ENCODE measurements at regions of chr1 and their contacts with region 1.

Region 1: DNA sequence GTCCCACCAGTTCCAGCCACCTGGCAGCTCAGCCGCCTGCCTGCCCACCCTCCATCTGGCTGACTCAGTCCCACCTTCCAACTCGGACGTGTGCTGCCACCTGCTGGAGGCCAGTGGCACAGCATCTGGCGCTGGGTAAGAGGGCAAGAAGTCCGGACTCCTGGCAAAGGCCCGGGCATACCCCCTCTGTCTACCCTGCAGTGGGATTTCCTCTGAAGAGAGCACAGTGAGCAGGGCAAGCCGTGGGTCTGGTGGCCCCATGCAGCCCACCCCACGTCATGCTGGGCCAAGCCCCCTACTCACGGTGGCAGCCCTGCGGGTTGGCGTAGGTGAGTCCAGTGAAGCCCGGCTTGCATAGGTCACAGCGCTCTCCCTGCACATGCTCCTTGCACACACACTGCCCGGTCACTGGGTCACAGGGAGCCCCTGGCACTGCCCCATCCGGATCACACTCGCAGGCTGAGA is 24.5 kb downstream of the LAMB3 start:
- DNase-seq: peak; percentile 45 to 84 (median 73)
- ATAC-seq: peak; percentile 84
- H3K4me3 ChIP-seq: no peak overlapping the region
- H3K4me3 Mint-ChIP-seq: no peak overlapping the region
- H3K27ac ChIP-seq: no peak overlapping the region
- H3K27ac Mint-ChIP-seq: no peak overlapping the region
- H3K4me1 ChIP-seq: no peaks in the 10 kb centered on the region
- H3K4me1 Mint-ChIP-seq: peaks cover 2% of the 10 kb centered on the region
- H3K27me3 ChIP-seq: no peaks in the 10 kb centered on the region
- H3K27me3 Mint-ChIP-seq: peaks cover 2% of the 10 kb centered on the region
- CTCF ChIP-seq: peak; percentile 95

Region 2: GRCh38 chr1:209576798-209577197 is 51.0 kb before region 1 on chr1:
- CTCF ChIA-PET with region 1: interaction called, 7 read pairs
- POLR2A ChIA-PET with region 1: no interaction called
- intact Hi-C with region 1: loop called (anchors 1 to 2 kb)
- DNase-seq: peak; percentile 24 to 71 (median 63)
- ATAC-seq: peak; percentile 75
- H3K4me3 ChIP-seq: no peak overlapping the region
- H3K4me3 Mint-ChIP-seq: no peak overlapping the region
- H3K27ac ChIP-seq: no peak overlapping the region
- H3K27ac Mint-ChIP-seq: no peak overlapping the region
- H3K4me1 ChIP-seq: no peaks in the 10 kb centered on the region
- H3K4me1 Mint-ChIP-seq: no peaks in the 10 kb centered on the region
- H3K27me3 ChIP-seq: no peaks in the 10 kb centered on the region
- H3K27me3 Mint-ChIP-seq: peaks cover 8% of the 10 kb centered on the region
- CTCF ChIP-seq: peak; percentile 82

Region 3: GRCh38 chr1:209611771-209612570 is 15.8 kb before region 1 on chr1:
- CTCF ChIA-PET with region 1: interaction called, 10 read pairs
- POLR2A ChIA-PET with region 1: no interaction called
- intact Hi-C with region 1: no loop called
- DNase-seq: peak in 1 of 9 experiments; percentile 37
- ATAC-seq: no peak
- H3K4me3 ChIP-seq: no peak overlapping the region
- H3K4me3 Mint-ChIP-seq: no peak overlapping the region
- H3K27ac ChIP-seq: no peak overlapping the region
- H3K27ac Mint-ChIP-seq: no peak overlapping the region
- H3K4me1 ChIP-seq: no peaks in the 10 kb centered on the region
- H3K4me1 Mint-ChIP-seq: no peaks in the 10 kb centered on the region
- H3K27me3 ChIP-seq: no peaks in the 10 kb centered on the region
- H3K27me3 Mint-ChIP-seq: peaks cover 3% of the 10 kb centered on the region
- CTCF ChIP-seq: no peak